BJ (cell line): ENCODE measurements at regions of chr10 and their contacts with region 1.

Region 1: DNA sequence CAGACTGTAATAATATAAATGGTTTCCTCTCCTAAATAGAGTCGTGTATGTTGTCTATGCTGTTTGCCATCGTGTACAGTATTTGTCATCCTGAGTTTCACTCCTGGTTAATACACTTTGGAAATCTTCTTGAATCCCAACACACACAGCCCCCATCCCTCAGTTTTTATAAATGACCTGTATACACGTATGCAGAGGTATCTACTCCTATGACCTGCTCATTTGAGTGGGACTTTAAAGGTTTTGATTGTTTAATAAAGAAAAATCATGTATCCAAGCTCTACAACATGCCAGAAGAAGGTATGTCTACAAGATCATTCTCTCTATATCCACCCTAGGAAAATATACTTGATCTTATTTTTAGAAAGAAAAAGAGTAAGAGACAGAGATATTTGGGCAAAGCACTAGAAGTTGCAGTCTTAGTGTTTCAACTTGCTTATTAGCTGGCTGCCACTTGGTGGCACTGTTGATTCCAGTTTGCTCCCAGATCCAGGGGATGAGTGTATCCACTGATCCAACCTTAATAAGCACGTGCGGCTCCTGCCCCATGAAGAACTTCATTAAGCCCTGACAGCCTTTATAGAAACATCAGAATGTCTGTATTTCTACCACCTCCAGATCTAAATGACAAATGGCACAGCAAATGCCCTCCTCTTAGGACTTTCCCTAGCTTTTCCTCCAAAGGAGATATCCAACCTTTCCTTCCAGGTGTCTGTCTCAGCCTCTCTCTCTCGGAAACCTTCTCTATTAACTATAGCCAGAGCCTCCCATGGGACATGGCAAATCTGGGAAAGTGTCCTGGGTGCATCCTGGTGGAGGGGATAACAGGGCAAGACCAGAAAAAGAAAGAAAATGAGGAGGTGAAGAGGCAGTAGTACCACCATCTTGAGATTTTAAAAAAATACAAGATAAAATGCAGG is 181.6 kb upstream of the NEBL start:
- DNase-seq: no peak
- H3K4me3 ChIP-seq: no peak overlapping the region
- H3K27me3 ChIP-seq: no peaks in the 10 kb centered on the region
- CTCF ChIP-seq: peak; percentile 80

Region 2: GRCh38 chr10:21092683-21093524 is 14.2 kb after region 1 on chr10:
- CTCF ChIA-PET with region 1: interaction called, 10 read pairs
- POLR2A ChIA-PET with region 1: no interaction called
- DNase-seq: no peak
- H3K4me3 ChIP-seq: no peak overlapping the region
- H3K27me3 ChIP-seq: no peaks in the 10 kb centered on the region
- CTCF ChIP-seq: no peak